ENCODE measurements at regions of chr2 and their contacts with region 1.

Region 1: DNA sequence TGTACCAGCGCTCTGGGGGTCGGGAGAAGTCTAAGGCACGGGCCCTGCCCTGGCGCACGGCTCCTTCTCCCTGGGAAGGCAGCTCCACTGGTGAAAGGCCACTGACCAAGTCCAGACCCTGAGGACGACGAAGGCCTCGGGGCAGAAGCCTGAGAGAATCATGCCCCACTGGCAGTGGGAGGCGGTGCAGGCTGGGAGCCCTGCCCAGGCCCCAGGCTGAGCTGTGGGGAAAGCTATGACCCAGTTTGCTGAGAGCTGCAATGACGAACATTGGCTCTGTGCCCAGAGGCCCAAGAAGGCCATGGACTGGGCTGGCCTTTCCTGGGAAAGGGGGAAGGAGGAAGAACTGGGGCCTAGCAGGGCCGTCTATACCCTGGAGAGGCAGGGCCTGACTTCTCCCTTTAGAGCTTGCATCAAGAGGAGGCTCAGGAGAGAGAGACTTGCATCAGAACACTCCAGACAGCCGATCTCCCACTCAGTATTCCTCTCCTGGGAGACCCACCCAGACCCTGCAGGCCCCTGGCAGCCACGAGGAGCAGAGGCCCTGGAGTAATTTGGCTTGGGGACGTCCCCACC is 32.9 kb downstream of the HS1BP3 start:
- DNase-seq: peak; percentile 92
- H3K4me3 ChIP-seq: no peak overlapping the region
- H3K27ac ChIP-seq: peak overlapping the region; percentile 90 to 91 (median 90)
- H3K4me1 ChIP-seq: peaks cover 51 to 72% (median 61%) of the 10 kb centered on the region in 4 donors
- H3K27me3 ChIP-seq: no peaks in the 10 kb centered on the region
- CTCF ChIP-seq: peak; percentile 48 to 82 (median 60)
- EP300 ChIP-seq: peak; percentile 92
- POLR2A ChIP-seq: peak; percentile 29

Region 2: GRCh38 chr2:20446917-20447436 is 171.0 kb before region 1 on chr2 and contains the start of gene RHOB:
- in situ Hi-C with region 1: no loop called
- intact Hi-C with region 1: loop called (anchors 5 kb)
- DNase-seq: peak; percentile 97
- H3K4me3 ChIP-seq: peak within 1 kb of the TSS; percentile 62 to 96 (median 81)
- H3K27ac ChIP-seq: peak within 1 kb of the TSS; percentile 97 to 99 (median 97)
- H3K4me1 ChIP-seq: peaks cover 9 to 56% (median 27%) of the 10 kb centered on the region in 4 donors
- H3K27me3 ChIP-seq: no peaks in the 10 kb centered on the region
- CTCF ChIP-seq: peak in 1 of 5 experiments; percentile 19
- EP300 ChIP-seq: no peak
- POLR2A ChIP-seq: peak; percentile 100
- total RNA-seq, gene RHOB: 360 to 732 (median 532) TPM

Region 3: GRCh38 chr2:20584637-20585321 is 33.2 kb before region 1 on chr2:
- in situ Hi-C with region 1: no loop called
- intact Hi-C with region 1: loop called (anchors 1 kb)
- DNase-seq: peak; percentile 41
- H3K4me3 ChIP-seq: no peak overlapping the region
- H3K27ac ChIP-seq: peak overlapping the region; percentile 40 to 76 (median 58)
- H3K4me1 ChIP-seq: peaks cover 5 to 18% (median 7%) of the 10 kb centered on the region in 4 donors
- H3K27me3 ChIP-seq: no peaks in the 10 kb centered on the region
- CTCF ChIP-seq: no peak
- EP300 ChIP-seq: no peak
- POLR2A ChIP-seq: no peak